PC-9 (cell line): ENCODE measurements at regions of chr19 and their contacts with region 1.

Region 1: DNA sequence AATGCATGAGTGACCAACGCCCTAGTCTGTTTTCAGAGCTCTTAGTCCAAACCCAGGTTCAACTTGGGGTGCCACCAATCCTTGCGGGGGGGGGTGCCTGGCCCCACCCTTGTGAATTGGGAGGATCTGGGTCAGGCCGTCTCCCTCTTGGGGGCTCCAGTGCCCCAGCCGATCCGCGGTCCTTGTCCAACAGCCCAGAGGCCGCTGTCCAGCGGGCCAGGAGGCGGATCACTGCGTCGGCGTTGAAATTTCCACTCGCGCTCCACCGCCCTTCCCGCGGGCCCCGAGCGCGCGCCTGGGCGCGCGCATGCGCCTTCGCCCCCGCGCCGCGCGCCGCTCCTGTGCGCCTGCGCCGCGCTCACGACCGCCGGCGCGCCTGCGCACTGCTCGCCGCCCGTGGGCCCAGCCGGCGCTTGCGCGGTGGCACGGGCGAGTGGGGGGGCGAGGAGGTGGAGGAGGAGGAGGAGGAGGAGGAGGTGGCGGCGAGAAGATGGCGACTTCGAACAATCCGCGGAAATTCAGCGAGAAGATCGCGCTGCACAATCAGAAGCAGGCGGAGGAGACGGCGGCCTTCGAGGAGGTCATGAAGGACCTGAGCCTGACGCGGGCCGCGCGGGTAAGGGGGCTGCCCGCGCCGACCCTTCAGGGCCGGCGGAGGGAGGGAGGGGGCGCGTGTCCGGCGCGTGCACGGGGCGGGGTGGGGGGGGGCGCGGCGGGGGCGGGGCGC is at the start of gene CRTC1:
- DNase-seq: peak; percentile 65 to 94
- H3K4me3 ChIP-seq: peak within 1 kb of the TSS; percentile 80
- H3K27ac ChIP-seq: 0 out of 2 replicates have a peak within 1 kb of the TSS, but pooled peaks have one; percentile 6
- H3K4me1 ChIP-seq: peaks cover 31% of the 10 kb centered on the region
- H3K27me3 ChIP-seq: no peaks in the 10 kb centered on the region
- CTCF ChIP-seq: no peak
- total RNA-seq, gene CRTC1: 13.3 and 16.6 TPM in 2 replicates

Region 2: DNA sequence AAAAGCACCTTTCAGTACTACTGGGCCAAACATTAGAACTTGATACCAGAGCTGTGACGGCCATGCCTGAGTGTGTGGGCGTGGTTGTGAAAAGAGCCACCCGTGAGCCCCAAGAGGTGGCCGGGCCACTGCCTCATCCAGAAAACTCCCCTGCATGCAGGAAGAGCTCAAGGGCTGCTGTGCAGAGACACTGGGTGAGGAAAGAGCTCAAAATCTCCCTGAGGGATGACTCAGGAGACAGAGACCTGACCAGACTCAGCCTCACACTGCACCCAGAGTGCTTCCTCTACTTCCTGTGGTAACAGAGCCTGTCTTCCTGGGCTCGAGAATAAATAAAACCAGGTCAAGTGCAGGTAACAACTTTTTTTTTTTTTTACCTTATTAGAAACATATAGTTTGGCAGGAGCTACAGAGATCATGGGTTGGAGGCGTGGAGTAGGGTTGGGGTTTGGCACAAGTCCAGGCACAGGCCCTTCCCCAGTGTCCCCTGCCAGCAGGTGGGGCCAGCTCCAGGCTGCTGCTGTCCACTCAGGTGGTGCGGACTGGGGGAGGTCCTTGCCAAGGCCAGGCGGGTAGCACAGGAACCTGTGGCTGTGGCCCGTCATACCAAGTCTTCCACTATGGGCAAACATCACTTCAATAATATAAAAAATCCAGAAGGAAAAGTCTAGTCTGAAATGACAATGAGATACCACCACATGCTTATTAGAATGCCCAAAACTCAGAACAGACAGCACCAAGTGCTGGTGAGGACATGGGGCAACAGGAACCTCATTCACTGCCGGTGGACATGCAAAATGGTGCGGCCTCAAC is 187.0 kb before region 1 on chr19:
- CTCF ChIA-PET with region 1: no interaction called
- POLR2A ChIA-PET with region 1: no interaction called
- intact Hi-C with region 1: no loop called
- DNase-seq: peak; percentile 69 to 83
- H3K4me3 ChIP-seq: no peak overlapping the region
- H3K27ac ChIP-seq: peak overlapping the region; percentile 29
- H3K4me1 ChIP-seq: peaks cover 24% of the 10 kb centered on the region
- H3K27me3 ChIP-seq: no peaks in the 10 kb centered on the region
- CTCF ChIP-seq: no peak; the same call in 1 of the 2 replicates

Region 3: DNA sequence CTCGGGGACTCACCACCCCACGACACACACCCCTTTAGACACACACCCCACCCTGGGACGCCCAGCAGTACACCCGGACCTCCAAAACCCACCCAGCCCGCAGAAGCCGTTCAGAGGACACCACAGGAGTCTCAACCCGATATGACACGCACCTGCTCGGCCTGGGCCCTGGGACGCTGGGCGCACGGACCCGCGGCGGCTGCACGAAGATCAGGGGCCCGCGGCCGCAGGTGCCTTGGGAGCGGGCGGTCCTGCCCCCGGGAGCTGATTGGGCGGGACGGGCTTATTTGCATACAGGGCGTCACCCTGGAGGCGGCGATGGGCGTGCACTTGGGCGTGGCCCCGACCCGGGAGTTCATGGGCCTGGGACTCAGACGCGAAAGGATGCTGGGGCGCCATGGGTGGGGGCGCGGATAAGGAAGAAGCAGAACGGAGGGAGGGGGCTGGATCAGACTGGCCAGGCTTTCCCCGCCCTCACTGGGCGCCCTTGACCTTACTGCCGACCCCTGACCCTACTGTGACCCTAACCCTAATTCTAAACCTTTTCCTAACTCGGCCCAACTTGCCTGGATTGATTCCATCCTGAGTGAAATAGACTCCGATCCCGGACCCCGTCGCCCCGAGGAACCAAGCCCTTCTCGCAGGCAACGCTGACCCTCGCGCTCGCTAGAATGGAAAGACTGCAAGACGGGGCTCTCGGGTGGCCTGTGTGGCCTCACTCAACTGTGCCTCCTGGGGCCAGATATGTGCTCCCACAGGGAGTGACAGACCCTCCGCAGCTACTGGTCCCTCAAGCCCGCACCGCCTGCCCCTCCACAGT is 486.9 kb after region 1 on chr19 and contains the start of gene MEF2B:
- CTCF ChIA-PET with region 1: no interaction called
- POLR2A ChIA-PET with region 1: interaction called, 10 read pairs
- intact Hi-C with region 1: no loop called
- DNase-seq: peak; percentile 44 to 76
- H3K4me3 ChIP-seq: no peak within 1 kb of the TSS
- H3K27ac ChIP-seq: no peak within 1 kb of the TSS
- H3K4me1 ChIP-seq: peaks cover 9% of the 10 kb centered on the region
- H3K27me3 ChIP-seq: no peaks in the 10 kb centered on the region
- CTCF ChIP-seq: no peak
- total RNA-seq, gene MEF2B: 1.8 and 3.9 TPM in 2 replicates